CD4-positive, alpha-beta memory T cell (primary cell): ENCODE measurements at regions of chr17 and their contacts with region 1.

Region 1: GRCh38 chr17:43483674-43484372 is at the start of gene DHX8:
- DNase-seq: peak; percentile 97 to 99 (median 98)
- H3K4me3 ChIP-seq: peak within 1 kb of the TSS; percentile 84 to 98
- H3K4me3 Mint-ChIP-seq: peak within 1 kb of the TSS; percentile 96 to 100 (median 100)
- H3K27ac ChIP-seq: peak within 1 kb of the TSS; percentile 78
- H3K27ac Mint-ChIP-seq: peak within 1 kb of the TSS; percentile 93 to 100 (median 99)
- H3K4me1 ChIP-seq: peaks cover 25% of the 10 kb centered on the region
- H3K4me1 Mint-ChIP-seq: peaks cover 17 to 39% (median 29%) of the 10 kb centered on the region in 4 donors
- H3K27me3 ChIP-seq: no peaks in the 10 kb centered on the region
- H3K27me3 Mint-ChIP-seq: peaks cover 0 to 1% of the 10 kb centered on the region in 2 donors
- total RNA-seq, gene DHX8: 75.8 to 78.2 TPM

Region 2: GRCh38 chr17:42832974-42833766 is 650.7 kb before region 1 on chr17 and contains the start of gene PSME3:
- CTCF ChIA-PET with region 1: no interaction called
- POLR2A ChIA-PET with region 1: interaction called, 6 read pairs
- intact Hi-C with region 1: loop called (anchors 10 kb)
- DNase-seq: peak; percentile 88 to 92 (median 90)
- H3K4me3 ChIP-seq: peak within 1 kb of the TSS; percentile 72 to 97
- H3K4me3 Mint-ChIP-seq: peak within 1 kb of the TSS; percentile 93 to 97 (median 96)
- H3K27ac ChIP-seq: peak within 1 kb of the TSS; percentile 94
- H3K27ac Mint-ChIP-seq: peak within 1 kb of the TSS; percentile 99 to 100 (median 99)
- H3K4me1 ChIP-seq: peaks cover 17% of the 10 kb centered on the region
- H3K4me1 Mint-ChIP-seq: peaks cover 19 to 31% (median 25%) of the 10 kb centered on the region in 4 donors
- H3K27me3 ChIP-seq: no peaks in the 10 kb centered on the region
- H3K27me3 Mint-ChIP-seq: no peaks in the 10 kb centered on the region
- total RNA-seq, gene PSME3: 65.1 to 69.9 TPM

Region 3: GRCh38 chr17:43125133-43125966 is 358.5 kb before region 1 on chr17 and contains the start of gene BRCA1:
- CTCF ChIA-PET with region 1: no interaction called
- POLR2A ChIA-PET with region 1: interaction called, 3 read pairs
- intact Hi-C with region 1: loop called (anchors 5 kb)
- DNase-seq: peak; percentile 95 to 98 (median 97)
- H3K4me3 ChIP-seq: peak within 1 kb of the TSS; percentile 80 to 89
- H3K4me3 Mint-ChIP-seq: peak within 1 kb of the TSS; percentile 87 to 98 (median 96)
- H3K27ac ChIP-seq: peak within 1 kb of the TSS; percentile 72
- H3K27ac Mint-ChIP-seq: peak within 1 kb of the TSS; percentile 82 to 98 (median 96)
- H3K4me1 ChIP-seq: peaks cover 17% of the 10 kb centered on the region
- H3K4me1 Mint-ChIP-seq: peaks cover 19 to 35% (median 27%) of the 10 kb centered on the region in 4 donors
- H3K27me3 ChIP-seq: no peaks in the 10 kb centered on the region
- H3K27me3 Mint-ChIP-seq: no peaks in the 10 kb centered on the region
- total RNA-seq, gene BRCA1: 4.8 to 6.0 TPM

Region 4: GRCh38 chr17:43338886-43339516 is 144.8 kb before region 1 on chr17:
- CTCF ChIA-PET with region 1: interaction called, 16 read pairs
- POLR2A ChIA-PET with region 1: no interaction called
- intact Hi-C with region 1: loop called (anchors 1 kb)
- DNase-seq: peak; percentile 45 to 63 (median 53)
- H3K4me3 ChIP-seq: no peak overlapping the region
- H3K4me3 Mint-ChIP-seq: no peak overlapping the region
- H3K27ac ChIP-seq: no peak overlapping the region
- H3K27ac Mint-ChIP-seq: no peak overlapping the region
- H3K4me1 ChIP-seq: peaks cover 2% of the 10 kb centered on the region
- H3K4me1 Mint-ChIP-seq: peaks cover 2 to 16% (median 7%) of the 10 kb centered on the region in 4 donors
- H3K27me3 ChIP-seq: no peaks in the 10 kb centered on the region
- H3K27me3 Mint-ChIP-seq: peaks cover 0 to 5% of the 10 kb centered on the region in 2 donors

Region 5: GRCh38 chr17:43388359-43389045 is 95.3 kb before region 1 on chr17:
- CTCF ChIA-PET with region 1: interaction called, 178 read pairs
- POLR2A ChIA-PET with region 1: interaction called, 136 read pairs
- intact Hi-C with region 1: loop called (anchors 1 kb)
- DNase-seq: peak; percentile 92 to 95 (median 93)
- H3K4me3 ChIP-seq: peak overlapping the region; percentile 73 to 86
- H3K4me3 Mint-ChIP-seq: peak overlapping the region; percentile 92 to 100 (median 97)
- H3K27ac ChIP-seq: peak overlapping the region; percentile 93
- H3K27ac Mint-ChIP-seq: peak overlapping the region; percentile 97 to 100 (median 98)
- H3K4me1 ChIP-seq: peaks cover 19% of the 10 kb centered on the region
- H3K4me1 Mint-ChIP-seq: peaks cover 12 to 35% (median 27%) of the 10 kb centered on the region in 4 donors
- H3K27me3 ChIP-seq: no peaks in the 10 kb centered on the region
- H3K27me3 Mint-ChIP-seq: no peaks in the 10 kb centered on the region

Region 6: GRCh38 chr17:43403846-43404245 is 80.0 kb before region 1 on chr17:
- CTCF ChIA-PET with region 1: interaction called, 178 read pairs
- POLR2A ChIA-PET with region 1: interaction called, 136 read pairs
- intact Hi-C with region 1: no loop called
- DNase-seq: no peak
- H3K4me3 ChIP-seq: no peak overlapping the region
- H3K4me3 Mint-ChIP-seq: no peak overlapping the region
- H3K27ac ChIP-seq: no peak overlapping the region
- H3K27ac Mint-ChIP-seq: peak overlapping the region in 1 of 7 donors; percentile 11
- H3K4me1 ChIP-seq: peaks cover 17% of the 10 kb centered on the region
- H3K4me1 Mint-ChIP-seq: peaks cover 11 to 30% (median 18%) of the 10 kb centered on the region in 4 donors
- H3K27me3 ChIP-seq: no peaks in the 10 kb centered on the region
- H3K27me3 Mint-ChIP-seq: peaks cover 2 to 6% of the 10 kb centered on the region in 2 donors

Region 7: GRCh38 chr17:43584666-43585102 is 100.9 kb after region 1 on chr17:
- CTCF ChIA-PET with region 1: no interaction called
- POLR2A ChIA-PET with region 1: no interaction called
- intact Hi-C with region 1: no loop called
- DNase-seq: no peak
- H3K4me3 ChIP-seq: no peak overlapping the region
- H3K4me3 Mint-ChIP-seq: no peak overlapping the region
- H3K27ac ChIP-seq: no peak overlapping the region
- H3K27ac Mint-ChIP-seq: no peak overlapping the region
- H3K4me1 ChIP-seq: no peaks in the 10 kb centered on the region
- H3K4me1 Mint-ChIP-seq: peaks cover under 1 to 6% (median under 1%) of the 10 kb centered on the region in 4 donors
- H3K27me3 ChIP-seq: no peaks in the 10 kb centered on the region
- H3K27me3 Mint-ChIP-seq: no peaks in the 10 kb centered on the region